ENCODE measurements at regions of chr20 and their contacts with region 1.

Region 1: GRCh38 chr20:6395695-6396094 is 272.9 kb upstream of the FERMT1 start:
- DNase-seq: peak in 1 of 2 experiments; percentile 58
- H3K4me3 ChIP-seq: no peak overlapping the region
- H3K27ac ChIP-seq: no peak overlapping the region
- H3K4me1 ChIP-seq: no peaks in the 10 kb centered on the region
- H3K27me3 ChIP-seq: peaks cover 3% of the 10 kb centered on the region; the same call in 1 of the 2 replicates
- CTCF ChIP-seq: no peak

Region 2: DNA sequence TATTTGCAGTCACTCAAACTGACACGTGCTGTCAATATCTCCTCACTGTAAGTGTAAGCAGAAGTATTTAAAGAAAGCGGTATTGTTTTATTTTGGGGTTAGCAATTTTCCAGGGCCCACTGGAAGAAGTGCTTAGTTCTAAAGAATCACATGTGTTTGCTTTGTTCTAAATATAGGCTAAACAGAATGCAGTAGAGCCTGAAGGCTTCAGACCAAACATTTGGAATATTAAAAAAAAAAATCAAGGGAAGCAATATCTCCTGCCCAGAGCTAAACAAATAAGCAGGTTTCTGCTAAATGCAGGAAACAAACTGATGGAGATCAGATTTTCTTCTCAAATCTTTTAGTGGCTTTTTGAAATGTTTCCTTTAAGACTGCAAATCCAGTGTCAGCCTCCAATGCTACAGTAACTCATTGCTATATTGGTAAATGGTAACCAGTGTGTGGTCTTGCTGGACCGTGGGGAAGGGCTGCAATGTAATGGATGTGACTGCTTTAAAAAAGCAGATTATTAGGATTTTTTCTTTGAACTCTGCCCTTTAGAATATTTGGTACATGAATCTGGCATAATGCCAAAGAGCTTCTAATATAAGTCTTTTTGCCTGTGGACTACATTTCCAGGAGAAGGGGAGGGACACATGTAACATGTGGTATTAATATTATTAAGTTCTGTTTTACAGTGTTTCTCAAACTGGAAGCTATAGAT is 44.2 kb after region 1 on chr20:
- CTCF ChIA-PET with region 1: no interaction called
- POLR2A ChIA-PET with region 1: no interaction called
- intact Hi-C with region 1: loop called (anchors 2 kb)
- DNase-seq: no peak
- H3K4me3 ChIP-seq: no peak overlapping the region
- H3K27ac ChIP-seq: no peak overlapping the region
- H3K4me1 ChIP-seq: no peaks in the 10 kb centered on the region
- H3K27me3 ChIP-seq: no peaks in the 10 kb centered on the region
- CTCF ChIP-seq: no peak